ENCODE measurements at regions of chr15 and their contacts with region 1.

Region 1: GRCh38 chr15:58227706-58228543 is 89.7 kb downstream of the AQP9 start:
- DNase-seq: peak in 4 of 5 donors; percentile 49 to 58 (median 54)
- H3K4me3 ChIP-seq: no peak overlapping the region
- H3K4me3 Mint-ChIP-seq: no peak overlapping the region
- H3K27ac ChIP-seq: no peak overlapping the region
- H3K27ac Mint-ChIP-seq: no peak overlapping the region
- H3K4me1 ChIP-seq: no peaks in the 10 kb centered on the region
- H3K4me1 Mint-ChIP-seq: peaks cover 4 to 14% (median 11%) of the 10 kb centered on the region in 4 donors
- H3K27me3 ChIP-seq: no peaks in the 10 kb centered on the region
- H3K27me3 Mint-ChIP-seq: peaks cover 7 to 17% of the 10 kb centered on the region in 2 donors

Region 2: GRCh38 chr15:58761010-58761388 is 533.1 kb after region 1 on chr15:
- CTCF ChIA-PET with region 1: interaction called, 10 read pairs
- POLR2A ChIA-PET with region 1: no interaction called
- intact Hi-C with region 1: loop called (anchors 1 kb)
- DNase-seq: no peak
- H3K4me3 ChIP-seq: no peak overlapping the region
- H3K4me3 Mint-ChIP-seq: no peak overlapping the region
- H3K27ac ChIP-seq: no peak overlapping the region
- H3K27ac Mint-ChIP-seq: no peak overlapping the region
- H3K4me1 ChIP-seq: no peaks in the 10 kb centered on the region
- H3K4me1 Mint-ChIP-seq: no peaks in the 10 kb centered on the region
- H3K27me3 ChIP-seq: no peaks in the 10 kb centered on the region
- H3K27me3 Mint-ChIP-seq: peaks cover 0 to 3% of the 10 kb centered on the region in 2 donors

Region 3: GRCh38 chr15:58898150-58898680 is 670.3 kb after region 1 on chr15:
- CTCF ChIA-PET with region 1: no interaction called
- POLR2A ChIA-PET with region 1: no interaction called
- intact Hi-C with region 1: loop called (anchors 10 kb)
- DNase-seq: no peak
- H3K4me3 ChIP-seq: no peak overlapping the region
- H3K4me3 Mint-ChIP-seq: no peak overlapping the region
- H3K27ac ChIP-seq: no peak overlapping the region
- H3K27ac Mint-ChIP-seq: peak overlapping the region in 2 of 7 donors; percentile 62 to 75
- H3K4me1 ChIP-seq: no peaks in the 10 kb centered on the region
- H3K4me1 Mint-ChIP-seq: peaks cover 6 to 26% (median 10%) of the 10 kb centered on the region in 4 donors
- H3K27me3 ChIP-seq: no peaks in the 10 kb centered on the region
- H3K27me3 Mint-ChIP-seq: no peaks in the 10 kb centered on the region

Region 4: GRCh38 chr15:58957101-58957973 is 729.4 kb after region 1 on chr15:
- CTCF ChIA-PET with region 1: interaction called, 5 read pairs
- POLR2A ChIA-PET with region 1: no interaction called
- intact Hi-C with region 1: loop called (anchors 1 kb)
- DNase-seq: peak; percentile 63 to 69 (median 66)
- H3K4me3 ChIP-seq: no peak overlapping the region
- H3K4me3 Mint-ChIP-seq: peak overlapping the region in 1 of 8 donors; percentile 41
- H3K27ac ChIP-seq: no peak overlapping the region
- H3K27ac Mint-ChIP-seq: peak overlapping the region in 2 of 7 donors; percentile 70 to 84
- H3K4me1 ChIP-seq: peaks cover 4% of the 10 kb centered on the region
- H3K4me1 Mint-ChIP-seq: peaks cover 5 to 6% (median 6%) of the 10 kb centered on the region in 4 donors
- H3K27me3 ChIP-seq: no peaks in the 10 kb centered on the region
- H3K27me3 Mint-ChIP-seq: peaks cover 0 to 1% of the 10 kb centered on the region in 2 donors

Region 5: GRCh38 chr15:58980351-58980939 is 752.5 kb after region 1 on chr15:
- CTCF ChIA-PET with region 1: interaction called, 6 read pairs
- POLR2A ChIA-PET with region 1: no interaction called
- intact Hi-C with region 1: loop called (anchors 5 kb)
- DNase-seq: peak in 4 of 5 donors; percentile 41 to 51 (median 44)
- H3K4me3 ChIP-seq: no peak overlapping the region
- H3K4me3 Mint-ChIP-seq: peak overlapping the region in 2 of 8 donors; percentile 1 to 78
- H3K27ac ChIP-seq: no peak overlapping the region
- H3K27ac Mint-ChIP-seq: peak overlapping the region in 3 of 7 donors; percentile 22 to 68 (median 29)
- H3K4me1 ChIP-seq: peaks cover 30% of the 10 kb centered on the region
- H3K4me1 Mint-ChIP-seq: peaks cover 16 to 28% (median 22%) of the 10 kb centered on the region in 4 donors
- H3K27me3 ChIP-seq: no peaks in the 10 kb centered on the region
- H3K27me3 Mint-ChIP-seq: no peaks in the 10 kb centered on the region

Measured in CD4-positive, alpha-beta memory T cell (primary cell).